Right cardiac atrium (tissue), 5 donors: ENCODE measurements at regions of chr17 and their contacts with region 1.

Region 1: GRCh38 chr17:1580979-1581678 is 18.5 kb upstream of the PITPNA start:
- DNase-seq: no peak
- ATAC-seq: no peak
- H3K4me3 ChIP-seq: no peak overlapping the region
- H3K27ac ChIP-seq: no peak overlapping the region
- H3K4me1 ChIP-seq: no peaks in the 10 kb centered on the region
- H3K27me3 ChIP-seq: no peaks in the 10 kb centered on the region

Region 2: DNA sequence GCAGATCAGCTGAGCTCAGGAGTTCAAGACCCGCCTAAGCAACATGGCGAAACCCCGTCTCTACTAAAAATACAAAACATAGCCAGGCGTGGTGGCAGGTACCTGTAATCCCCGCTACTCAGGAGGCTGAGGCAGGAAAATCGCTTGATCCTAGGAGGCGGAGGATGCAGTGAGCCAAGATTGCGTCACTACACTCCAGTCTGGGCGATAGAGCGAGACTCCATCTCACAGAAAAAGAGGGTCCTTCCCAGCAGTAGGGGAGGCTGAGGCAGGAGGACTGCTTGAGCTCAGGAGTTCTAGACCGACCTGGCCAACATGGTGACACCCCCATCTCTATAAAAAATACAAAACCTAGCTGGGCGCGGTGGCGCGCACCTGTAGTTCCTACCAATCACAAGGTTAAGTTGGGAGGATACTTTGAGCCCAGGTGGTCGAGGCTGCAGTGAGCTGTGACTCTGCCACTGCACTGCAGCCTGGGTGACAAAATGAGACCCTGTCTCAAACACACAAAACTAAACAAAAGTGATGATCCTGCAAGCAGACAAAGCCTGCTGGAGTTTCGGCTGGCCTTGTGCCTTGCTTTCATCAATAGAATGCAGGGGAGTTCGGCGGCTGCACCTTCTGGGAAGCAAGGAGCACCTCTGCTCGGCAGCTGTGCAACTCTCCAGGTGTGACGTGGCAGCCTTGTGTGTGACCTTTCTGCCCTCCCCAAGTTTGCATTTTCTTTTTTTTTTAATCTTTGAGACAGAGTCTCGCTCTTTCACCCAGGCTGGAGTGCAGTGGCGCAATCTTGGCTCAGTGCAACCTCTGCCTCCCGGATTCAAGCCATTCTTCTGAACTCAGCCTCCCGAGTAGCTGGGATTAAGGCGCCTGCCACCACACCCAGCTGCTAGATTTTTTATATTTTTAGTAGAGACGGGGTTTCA is 168.7 kb before region 1 on chr17:
- intact Hi-C with region 1: no loop called
- DNase-seq: peak in 2 of 3 donors; percentile 42 to 72
- ATAC-seq: peak; percentile 56 to 75
- H3K4me3 ChIP-seq: no peak overlapping the region
- H3K27ac ChIP-seq: peak overlapping the region; percentile 63
- H3K4me1 ChIP-seq: peaks cover 14% of the 10 kb centered on the region
- H3K27me3 ChIP-seq: no peaks in the 10 kb centered on the region

Region 3: DNA sequence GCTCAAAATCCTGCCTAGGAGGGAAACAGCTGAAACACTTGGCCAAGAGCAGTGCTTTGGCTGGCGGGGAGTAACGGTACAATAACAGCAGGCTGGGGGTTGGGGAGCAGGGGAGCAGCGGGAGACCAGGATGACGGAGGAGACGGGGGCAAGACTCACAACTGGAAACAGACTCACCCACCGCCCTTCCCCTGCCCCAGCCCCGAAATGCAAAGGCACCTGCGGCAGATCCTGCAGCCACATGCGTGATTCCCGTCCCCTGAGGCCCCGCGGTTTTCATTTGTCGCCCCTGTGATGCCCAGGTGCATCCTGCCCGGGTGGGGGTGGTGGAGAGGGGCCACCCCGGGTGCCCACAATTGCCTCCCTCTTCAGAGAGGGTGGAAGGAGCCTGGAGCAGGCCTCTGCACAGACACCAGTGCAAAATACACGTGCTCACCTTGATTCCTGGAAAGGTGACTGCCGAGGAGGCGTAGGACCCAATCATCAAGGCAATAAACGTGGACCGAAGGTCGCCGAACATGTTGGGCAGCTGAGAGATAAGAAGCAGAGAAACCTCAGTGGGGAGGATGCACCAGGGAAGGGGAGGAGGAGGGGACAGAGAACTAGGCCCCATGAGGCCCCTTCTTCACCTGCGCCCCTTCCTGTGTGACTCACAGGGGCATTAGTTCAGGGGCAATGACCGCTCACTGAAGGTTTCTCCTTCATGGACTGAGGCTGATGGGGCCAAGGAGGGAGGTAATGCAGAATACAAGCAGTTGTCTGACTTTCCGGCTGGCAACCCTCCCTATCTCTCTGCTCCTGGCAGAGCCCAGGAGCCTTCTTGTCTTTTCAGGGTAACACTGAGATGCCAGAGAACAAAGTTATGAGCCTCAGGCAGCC is 11.9 kb after region 1 on chr17:
- intact Hi-C with region 1: no loop called
- DNase-seq: no peak
- ATAC-seq: no peak
- H3K4me3 ChIP-seq: no peak overlapping the region
- H3K27ac ChIP-seq: no peak overlapping the region
- H3K4me1 ChIP-seq: peaks cover 2% of the 10 kb centered on the region
- H3K27me3 ChIP-seq: no peaks in the 10 kb centered on the region

Region 4: GRCh38 chr17:1643293-1643998 is 62.3 kb after region 1 on chr17:
- intact Hi-C with region 1: loop called in 3 of 4 experiments (anchors 5 kb)
- DNase-seq: peak in 2 of 3 donors; percentile 71 to 80
- ATAC-seq: peak in 1 of 2 donors; percentile 0
- H3K4me3 ChIP-seq: peak overlapping the region; percentile 37
- H3K27ac ChIP-seq: peak overlapping the region; percentile 69
- H3K4me1 ChIP-seq: peaks cover 3% of the 10 kb centered on the region
- H3K27me3 ChIP-seq: no peaks in the 10 kb centered on the region